ENCODE measurements at regions of chr14 and their contacts with region 1.

Region 1: DNA sequence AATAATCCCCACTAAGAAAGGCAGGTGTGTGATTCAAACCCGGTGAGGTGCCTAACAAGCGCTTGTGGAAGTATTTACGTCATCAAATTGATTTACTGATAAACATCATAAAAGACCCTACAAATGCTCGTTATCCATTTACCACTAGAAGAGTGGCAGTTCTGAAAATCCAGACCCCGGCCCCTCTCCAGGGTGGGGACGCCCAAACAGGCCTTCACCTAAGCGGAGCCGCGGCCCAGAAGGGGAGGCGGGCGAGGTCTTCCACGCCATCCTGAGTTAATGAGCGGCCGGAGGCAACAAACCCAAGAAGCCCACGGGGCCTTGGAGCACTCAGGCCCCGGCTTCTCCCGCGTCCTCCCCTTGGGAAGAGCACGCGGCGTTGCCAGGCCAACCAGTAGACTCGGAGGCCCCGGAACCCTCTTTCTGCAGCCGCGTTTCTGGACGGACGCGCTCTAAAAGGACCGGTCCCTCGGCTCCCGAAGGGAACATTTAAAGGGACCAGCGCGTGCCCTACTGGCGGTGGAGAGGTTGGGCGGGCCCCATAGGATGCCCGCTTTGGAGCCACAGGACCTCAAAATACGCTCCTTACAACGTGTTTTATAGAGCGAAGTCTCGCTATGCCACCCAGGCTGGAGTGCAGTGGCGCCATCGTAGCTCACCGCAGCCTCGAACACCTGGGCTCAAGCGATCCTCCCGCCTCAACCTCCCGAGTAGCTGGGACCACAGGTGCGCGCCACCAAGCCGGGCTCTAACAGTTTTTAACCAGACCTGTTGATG is 3.5 kb downstream of the PTPN21 start:
- DNase-seq: peak; percentile 81 to 86 (median 83)
- ATAC-seq: peak; percentile 81 to 87 (median 84)
- H3K4me3 ChIP-seq: peak overlapping the region; percentile 38 to 91 (median 74)
- H3K27ac ChIP-seq: peak overlapping the region in 11 of 12 donors; percentile 54 to 85 (median 77)
- H3K4me1 ChIP-seq: peaks cover 11 to 70% (median 47%) of the 10 kb centered on the region in 12 donors
- H3K27me3 ChIP-seq: peaks cover 0 to 54% (median 0%) of the 10 kb centered on the region in 9 donors
- CTCF ChIP-seq: peak in 9 of 12 donors; percentile 24 to 58 (median 42)
- POLR2A ChIP-seq: peak in 1 of 2 donors; percentile 29

Region 2: GRCh38 chr14:87944987-87945604 is 606.2 kb before region 1 on chr14:
- intact Hi-C with region 1: loop called in 1 of 10 experiments (anchors 10 kb)
- DNase-seq: no peak
- ATAC-seq: no peak
- H3K4me3 ChIP-seq: no peak overlapping the region
- H3K27ac ChIP-seq: no peak overlapping the region
- H3K4me1 ChIP-seq: no peaks in the 10 kb centered on the region
- H3K27me3 ChIP-seq: no peaks in the 10 kb centered on the region
- CTCF ChIP-seq: peak; percentile 58 to 76 (median 66)
- POLR2A ChIP-seq: no peak

Region 3: GRCh38 chr14:87992718-87993628 is 558.3 kb before region 1 on chr14 and contains the start of gene GALC:
- intact Hi-C with region 1: loop called in 1 of 10 experiments (anchors 10 kb)
- DNase-seq: peak; percentile 95 to 98 (median 97)
- ATAC-seq: peak; percentile 93 to 97 (median 96)
- H3K4me3 ChIP-seq: peak within 1 kb of the TSS; percentile 50 to 94 (median 78)
- H3K27ac ChIP-seq: peak within 1 kb of the TSS; percentile 80 to 97 (median 94)
- H3K4me1 ChIP-seq: peaks cover 0 to 43% (median 20%) of the 10 kb centered on the region in 12 donors
- H3K27me3 ChIP-seq: no peaks in the 10 kb centered on the region
- CTCF ChIP-seq: no peak
- POLR2A ChIP-seq: peak in 1 of 2 donors; percentile 57
- total RNA-seq, gene GALC: 13.6 to 28.2 (median 19.2) TPM

Region 4: DNA sequence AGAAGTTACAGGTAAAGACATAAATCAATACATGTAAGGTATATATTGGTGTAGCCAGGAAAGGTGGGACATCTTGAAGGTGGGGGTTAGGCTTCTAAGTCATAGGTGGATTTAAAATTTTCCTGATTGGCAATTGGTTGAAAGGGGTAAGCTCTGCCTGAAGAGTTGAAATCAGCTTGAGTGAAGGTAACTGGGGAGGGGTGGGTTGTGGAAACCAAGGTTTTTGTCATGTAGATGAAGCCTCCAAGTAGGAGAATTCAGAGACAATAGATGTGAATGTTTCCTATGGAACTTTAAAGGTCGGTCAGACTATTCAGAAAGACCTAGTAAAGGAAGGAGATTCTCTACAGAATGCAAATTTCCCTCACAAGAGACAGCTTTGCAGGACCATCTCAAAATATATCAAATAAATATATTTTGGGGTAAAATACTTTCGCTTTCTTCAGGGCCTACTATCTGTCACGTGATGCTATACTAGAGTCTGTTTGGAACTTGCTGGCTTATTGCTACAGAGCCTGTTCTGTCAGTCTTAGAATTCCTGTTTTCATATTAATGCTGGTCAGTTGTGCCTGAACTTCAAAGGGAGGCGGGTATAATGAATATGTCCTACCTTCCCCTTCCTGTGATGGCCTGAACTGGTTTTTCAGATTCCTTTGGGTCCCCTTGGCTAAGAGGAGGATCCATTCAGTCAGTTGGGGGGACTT is 186.4 kb before region 1 on chr14:
- intact Hi-C with region 1: no loop called
- DNase-seq: no peak
- ATAC-seq: no peak
- H3K4me3 ChIP-seq: no peak overlapping the region
- H3K27ac ChIP-seq: no peak overlapping the region
- H3K4me1 ChIP-seq: no peaks in the 10 kb centered on the region
- H3K27me3 ChIP-seq: peaks cover 0 to 7% (median 0%) of the 10 kb centered on the region in 9 donors
- CTCF ChIP-seq: no peak
- POLR2A ChIP-seq: no peak

Region 5: GRCh38 chr14:88492272-88493089 is 58.8 kb before region 1 on chr14:
- intact Hi-C with region 1: loop called in 6 of 10 experiments (anchors 2 to 5 kb)
- DNase-seq: peak in 3 of 5 donors; percentile 51 to 69 (median 59)
- ATAC-seq: peak; percentile 31 to 78 (median 74)
- H3K4me3 ChIP-seq: no peak overlapping the region
- H3K27ac ChIP-seq: peak overlapping the region in 10 of 12 donors; percentile 3 to 71 (median 51)
- H3K4me1 ChIP-seq: peaks cover 0 to 23% (median 8%) of the 10 kb centered on the region in 12 donors
- H3K27me3 ChIP-seq: no peaks in the 10 kb centered on the region
- CTCF ChIP-seq: peak; percentile 87 to 96 (median 93)
- POLR2A ChIP-seq: no peak